ENCODE measurements at regions of chr3 and their contacts with region 1.

Region 1: GRCh38 chr3:195542698-195543499 is at the start of gene PPP1R2:
- DNase-seq: peak; percentile 78
- H3K4me3 ChIP-seq: peak within 1 kb of the TSS; percentile 91
- H3K27ac ChIP-seq: peak within 1 kb of the TSS; percentile 65
- H3K27me3 ChIP-seq: peaks cover 2% of the 10 kb centered on the region
- CTCF ChIP-seq: no peak
- polyA plus RNA-seq, gene PPP1R2: 84.3 and 92.0 TPM in 2 replicates

Region 2: DNA sequence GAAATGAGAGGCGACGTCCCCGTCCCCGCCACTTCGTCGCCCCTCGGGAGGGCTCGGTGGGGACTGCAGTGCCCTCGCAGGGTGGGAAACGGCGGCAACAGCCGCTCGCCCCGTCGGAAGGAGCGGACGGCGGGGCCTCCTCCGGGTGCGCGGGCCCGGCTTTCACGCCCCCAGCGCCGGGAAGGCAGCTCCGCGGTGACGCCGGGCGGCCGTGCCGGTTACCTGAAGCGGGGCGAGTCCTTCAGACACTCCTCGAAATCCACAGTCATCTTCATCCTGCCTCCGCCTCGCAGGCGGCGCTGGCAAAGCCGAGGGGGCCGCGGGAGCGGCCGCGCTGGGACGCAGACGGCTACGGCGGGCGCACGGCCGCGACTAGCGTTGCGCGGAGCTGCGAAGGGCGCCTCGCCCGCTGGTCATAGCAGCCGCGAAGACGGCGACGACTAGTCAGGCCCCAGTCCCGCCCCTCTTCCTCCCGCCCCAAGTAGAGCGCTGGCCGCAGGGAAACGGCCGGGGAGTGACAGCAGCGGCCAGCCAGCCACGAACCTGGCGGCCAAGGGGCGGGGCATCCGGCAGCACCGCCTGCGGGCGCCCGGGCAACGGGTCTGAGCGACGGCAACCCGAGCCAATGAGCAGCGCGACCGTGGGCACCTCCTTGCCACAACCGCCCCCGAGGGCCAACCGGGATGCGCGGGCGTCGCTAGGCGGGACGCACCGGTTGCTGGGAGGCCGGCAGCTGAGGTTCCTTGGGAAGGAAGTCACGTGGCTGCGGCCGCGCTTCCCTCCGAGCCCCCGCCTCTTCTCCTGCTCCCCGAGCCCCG is 100.1 kb before region 1 on chr3 and contains the start of gene ACAP2:
- CTCF ChIA-PET with region 1: no interaction called
- POLR2A ChIA-PET with region 1: interaction called, 12 read pairs
- DNase-seq: peak; percentile 99
- H3K4me3 ChIP-seq: peak within 1 kb of the TSS; percentile 60
- H3K27ac ChIP-seq: peak within 1 kb of the TSS; percentile 25
- H3K27me3 ChIP-seq: no peaks in the 10 kb centered on the region
- CTCF ChIP-seq: no peak
- polyA plus RNA-seq, gene ACAP2: 35.9 and 50.2 TPM in 2 replicates